Dorsolateral prefrontal cortex (tissue), 120 donors: ENCODE measurements at regions of chr2 and their contacts with region 1.

Region 1: GRCh38 chr2:23566236-23567142 is 181.5 kb downstream of the KLHL29 start:
- DNase-seq: no peak
- H3K4me3 ChIP-seq: no peak overlapping the region
- H3K27ac ChIP-seq: peak overlapping the region in 12 of 59 donors; percentile 6 to 59 (median 23)
- H3K27me3 ChIP-seq: no peaks in the 10 kb centered on the region
- CTCF ChIP-seq: peak in 51 of 56 donors; percentile 16 to 64 (median 40)

Region 2: GRCh38 chr2:23384551-23385349 is 181.7 kb before region 1 on chr2 and contains the start of gene KLHL29:
- intact Hi-C with region 1: loop called in 1 of 2 experiments (anchors 10 kb)
- DNase-seq: peak; percentile 69 to 90 (median 75)
- H3K4me3 ChIP-seq: peak within 1 kb of the TSS; percentile 49 to 81 (median 69)
- H3K27ac ChIP-seq: peak within 1 kb of the TSS in 48 of 59 donors; percentile 32 to 91 (median 74)
- H3K27me3 ChIP-seq: peaks cover 0 to 45% (median 5%) of the 10 kb centered on the region in 45 donors
- CTCF ChIP-seq: no peak
- total RNA-seq, gene KLHL29: 6.7 to 37.3 (median 23.6) TPM

Region 3: DNA sequence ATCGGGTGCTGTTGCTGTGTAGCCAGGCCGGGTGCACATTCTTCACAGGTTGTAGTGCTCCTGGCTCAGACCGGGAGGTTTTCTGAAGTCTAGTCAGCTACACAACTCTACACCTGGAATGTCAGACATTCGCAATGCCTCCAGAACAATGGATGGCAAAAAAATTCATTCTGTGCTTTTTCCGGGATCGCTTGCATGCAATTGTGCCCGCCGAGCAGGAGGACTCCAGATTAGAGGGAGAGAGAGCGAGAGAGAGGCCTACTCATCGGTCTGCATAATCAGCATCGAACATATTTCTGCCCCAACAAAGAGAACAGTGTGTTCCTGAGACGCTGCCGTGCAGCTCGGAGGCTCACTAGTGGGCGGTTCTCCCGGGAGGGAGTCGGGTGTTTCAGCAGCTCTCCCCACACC is 64.4 kb before region 1 on chr2:
- intact Hi-C with region 1: loop called in 1 of 2 experiments (anchors 5 kb)
- DNase-seq: peak in 9 of 10 donors; percentile 15 to 81 (median 72)
- H3K4me3 ChIP-seq: peak overlapping the region in 34 of 59 donors; percentile 0 to 45 (median 27)
- H3K27ac ChIP-seq: peak overlapping the region in 56 of 59 donors; percentile 5 to 87 (median 68)
- H3K27me3 ChIP-seq: no peaks in the 10 kb centered on the region
- CTCF ChIP-seq: peak in 4 of 56 donors; percentile 10 to 20 (median 12)

Region 4: GRCh38 chr2:23524261-23524706 is 42.2 kb before region 1 on chr2:
- intact Hi-C with region 1: no loop called
- DNase-seq: peak in 2 of 10 donors; percentile 49 to 71
- H3K4me3 ChIP-seq: no peak overlapping the region
- H3K27ac ChIP-seq: peak overlapping the region in 11 of 59 donors; percentile 10 to 61 (median 22)
- H3K27me3 ChIP-seq: no peaks in the 10 kb centered on the region
- CTCF ChIP-seq: no peak

Region 5: DNA sequence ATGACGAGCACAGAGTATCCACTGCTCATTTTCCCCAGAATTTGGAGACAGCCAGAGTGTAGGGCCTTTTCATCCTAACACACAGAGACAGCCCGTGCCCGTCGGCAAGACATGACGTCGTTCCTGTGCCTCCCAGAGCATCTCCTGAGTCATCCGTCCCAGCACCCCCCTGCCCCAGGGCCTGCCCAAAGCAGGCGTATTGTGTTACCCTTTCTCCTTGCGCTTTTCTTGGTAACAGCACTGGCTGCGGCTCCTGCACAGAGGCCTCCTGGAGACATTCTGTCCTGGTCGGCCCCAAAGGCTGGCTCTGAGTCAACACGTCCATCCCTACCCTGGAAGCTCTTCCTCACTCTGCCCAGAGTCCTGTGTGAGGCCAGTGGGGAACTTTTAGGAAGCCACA is 35.6 kb after region 1 on chr2:
- intact Hi-C with region 1: no loop called
- DNase-seq: peak in 1 of 10 donors; percentile 44
- H3K4me3 ChIP-seq: no peak overlapping the region
- H3K27ac ChIP-seq: no peak overlapping the region
- H3K27me3 ChIP-seq: no peaks in the 10 kb centered on the region
- CTCF ChIP-seq: no peak

Region 6: DNA sequence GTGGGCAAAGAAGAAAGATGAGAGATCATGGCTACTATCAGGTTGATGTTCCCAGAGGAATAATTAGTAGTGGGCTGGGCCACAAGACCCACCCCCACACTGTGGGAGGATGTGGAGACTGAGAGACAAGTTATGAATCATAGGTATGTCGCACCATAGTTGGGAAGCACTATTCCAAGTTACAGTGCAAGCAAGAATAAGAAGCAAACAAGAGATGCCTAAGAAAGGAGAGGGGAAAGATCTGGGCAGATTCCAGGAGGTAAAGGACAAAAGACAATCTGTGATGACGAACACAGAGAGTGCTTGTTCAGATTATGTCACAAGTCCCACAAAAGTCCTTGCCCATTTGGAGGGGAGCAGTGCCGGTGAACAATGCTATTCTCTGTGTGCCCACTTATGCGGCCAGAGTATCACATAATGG is 665.0 kb after region 1 on chr2:
- intact Hi-C with region 1: no loop called
- DNase-seq: peak in 6 of 10 donors; percentile 52 to 84 (median 68)
- H3K4me3 ChIP-seq: peak overlapping the region in 5 of 59 donors; percentile 2 to 25 (median 9)
- H3K27ac ChIP-seq: peak overlapping the region; percentile 70 to 98 (median 90)
- H3K27me3 ChIP-seq: no peaks in the 10 kb centered on the region
- CTCF ChIP-seq: peak in 1 of 56 donors; percentile 25